ENCODE measurements at regions of chr3 and their contacts with region 1.

Region 1: DNA sequence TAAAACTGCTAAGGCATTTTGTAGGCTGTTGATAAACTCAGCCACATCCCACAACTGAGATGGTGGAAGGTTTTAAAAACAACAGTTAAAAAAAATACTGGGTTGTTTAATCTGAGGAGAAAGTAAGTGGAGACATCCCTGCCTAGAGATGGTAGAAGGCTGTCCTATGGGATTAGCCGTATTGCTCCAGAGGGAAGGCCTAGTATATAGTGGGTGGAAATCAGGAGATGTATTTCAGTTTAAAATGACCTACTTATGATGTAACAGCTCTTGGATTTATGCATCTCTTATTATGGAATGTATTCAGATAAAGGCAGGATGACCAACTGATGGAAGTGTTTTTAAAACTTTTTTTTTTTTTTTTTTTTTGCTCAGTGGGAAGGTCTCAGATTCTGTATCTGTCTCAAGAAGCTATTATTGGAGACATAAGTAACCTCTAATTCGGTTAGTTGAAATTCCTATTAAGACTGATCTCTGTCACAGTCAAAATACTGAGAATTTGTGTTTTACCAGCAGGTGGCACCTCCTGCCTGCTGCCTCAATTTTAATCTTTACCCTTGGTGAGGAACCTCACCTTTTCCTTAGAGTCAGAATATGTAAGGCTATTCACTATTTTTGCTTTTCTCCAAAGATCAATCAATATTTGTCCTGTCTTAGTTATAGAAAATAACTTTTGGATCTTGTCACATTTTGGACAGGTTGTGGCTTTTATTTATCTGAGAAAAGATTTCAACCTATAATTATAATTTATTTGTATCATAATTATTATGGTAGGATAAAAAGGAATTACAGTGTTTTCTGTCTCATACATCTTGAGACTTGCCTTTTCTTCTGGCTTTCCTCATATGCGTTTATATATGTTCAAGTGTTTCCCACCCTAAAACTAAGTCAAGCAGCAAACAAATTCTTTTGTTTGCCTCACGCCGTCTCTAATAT is 63.0 kb downstream of the VPS8 start:
- DNase-seq: peak; percentile 47
- H3K4me3 ChIP-seq: no peak overlapping the region; a peak in 1 of 4 replicates
- H3K27ac ChIP-seq: no peak overlapping the region
- H3K4me1 ChIP-seq: no peaks in the 10 kb centered on the region
- H3K27me3 ChIP-seq: no peaks in the 10 kb centered on the region
- CTCF ChIP-seq: peak; percentile 73
- EP300 ChIP-seq: no peak
- RAD21 ChIP-seq: peak; percentile 91

Region 2: DNA sequence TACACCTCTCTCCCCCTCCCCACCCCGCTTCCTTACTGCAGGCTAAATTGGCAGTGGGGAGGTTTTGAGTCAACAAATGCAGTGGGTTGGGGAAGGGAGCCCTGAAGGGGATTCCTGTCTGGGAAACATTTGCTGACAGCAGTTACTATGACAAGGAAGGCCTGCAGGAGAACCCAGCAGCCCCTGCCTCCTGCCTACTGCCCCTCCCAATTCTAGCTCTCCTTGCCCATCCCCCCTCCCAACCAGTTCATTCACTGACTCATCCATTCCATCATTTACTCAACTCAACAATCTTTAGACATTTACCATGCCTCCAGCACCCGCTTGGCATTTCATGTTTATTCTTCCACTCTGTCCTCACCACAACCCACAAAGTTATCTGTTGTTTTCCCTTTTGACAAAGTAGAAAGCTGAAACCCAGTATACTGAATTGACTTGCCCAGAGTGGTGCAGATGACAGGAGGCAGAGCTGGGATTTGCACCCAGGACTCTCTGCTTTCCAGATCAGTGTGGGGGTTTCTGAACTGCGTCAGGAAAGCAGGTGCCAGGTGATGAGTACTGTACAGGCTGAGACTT is 238.1 kb before region 1 on chr3:
- CTCF ChIA-PET with region 1: no interaction called
- POLR2A ChIA-PET with region 1: no interaction called
- DNase-seq: peak; percentile 38
- H3K4me3 ChIP-seq: no peak overlapping the region
- H3K27ac ChIP-seq: no peak overlapping the region
- H3K4me1 ChIP-seq: peaks cover 0 to 25% of the 10 kb centered on the region in 2 experiments; a peak in 2 of 4 replicates
- H3K27me3 ChIP-seq: no peaks in the 10 kb centered on the region
- CTCF ChIP-seq: no peak
- EP300 ChIP-seq: peak in 1 of 2 experiments; percentile 53; a peak in 2 of 4 replicates
- RAD21 ChIP-seq: no peak

Region 3: DNA sequence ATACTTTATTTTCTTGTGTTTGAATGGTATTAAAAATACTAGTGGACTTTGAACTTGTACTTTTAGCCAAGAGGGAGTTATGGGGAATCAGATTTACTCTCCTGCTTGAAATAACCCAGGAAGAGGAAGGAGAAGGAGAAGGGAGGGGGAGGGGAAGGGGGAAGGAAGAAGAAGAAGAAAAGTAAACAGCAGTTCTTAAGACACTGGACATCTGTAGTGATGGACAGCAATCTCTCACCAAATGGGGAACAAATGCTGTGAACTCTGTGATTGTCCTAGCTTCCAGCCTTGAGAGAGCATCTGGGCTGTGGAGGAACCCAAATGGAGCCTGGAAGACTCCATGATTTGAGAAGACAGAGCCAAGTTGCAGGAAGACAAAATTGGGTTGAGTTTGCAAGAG is 11.0 kb before region 1 on chr3:
- CTCF ChIA-PET with region 1: interaction called, 13 read pairs
- POLR2A ChIA-PET with region 1: no interaction called
- DNase-seq: no peak
- H3K4me3 ChIP-seq: no peak overlapping the region
- H3K27ac ChIP-seq: no peak overlapping the region
- H3K4me1 ChIP-seq: no peaks in the 10 kb centered on the region
- H3K27me3 ChIP-seq: no peaks in the 10 kb centered on the region
- CTCF ChIP-seq: no peak
- EP300 ChIP-seq: no peak
- RAD21 ChIP-seq: no peak

Region 4: DNA sequence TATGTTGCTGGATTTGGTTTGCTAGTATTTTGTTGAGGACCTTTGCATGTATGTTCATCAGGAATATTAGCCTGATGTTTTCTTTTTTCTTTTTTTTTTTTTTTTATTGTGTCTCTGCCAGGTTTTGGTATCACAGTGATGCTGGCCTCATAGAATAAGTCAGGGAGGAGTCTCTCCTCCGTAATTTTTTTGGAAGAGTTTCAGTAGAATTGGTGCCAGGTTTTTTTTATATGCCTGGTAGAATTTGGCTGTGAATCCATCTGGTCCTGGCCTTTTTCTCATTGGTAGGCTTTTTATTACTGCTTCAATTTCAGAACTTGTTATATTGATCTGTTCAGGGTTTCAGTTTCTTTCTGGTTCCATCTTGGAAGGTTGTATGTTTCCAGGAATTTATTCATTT is 102.8 kb after region 1 on chr3:
- CTCF ChIA-PET with region 1: no interaction called
- POLR2A ChIA-PET with region 1: no interaction called
- DNase-seq: no peak
- H3K4me3 ChIP-seq: no peak overlapping the region
- H3K27ac ChIP-seq: no peak overlapping the region
- H3K4me1 ChIP-seq: no peaks in the 10 kb centered on the region; a peak in 1 of 4 replicates
- H3K27me3 ChIP-seq: no peaks in the 10 kb centered on the region
- CTCF ChIP-seq: no peak
- EP300 ChIP-seq: no peak
- RAD21 ChIP-seq: no peak

Region 5: DNA sequence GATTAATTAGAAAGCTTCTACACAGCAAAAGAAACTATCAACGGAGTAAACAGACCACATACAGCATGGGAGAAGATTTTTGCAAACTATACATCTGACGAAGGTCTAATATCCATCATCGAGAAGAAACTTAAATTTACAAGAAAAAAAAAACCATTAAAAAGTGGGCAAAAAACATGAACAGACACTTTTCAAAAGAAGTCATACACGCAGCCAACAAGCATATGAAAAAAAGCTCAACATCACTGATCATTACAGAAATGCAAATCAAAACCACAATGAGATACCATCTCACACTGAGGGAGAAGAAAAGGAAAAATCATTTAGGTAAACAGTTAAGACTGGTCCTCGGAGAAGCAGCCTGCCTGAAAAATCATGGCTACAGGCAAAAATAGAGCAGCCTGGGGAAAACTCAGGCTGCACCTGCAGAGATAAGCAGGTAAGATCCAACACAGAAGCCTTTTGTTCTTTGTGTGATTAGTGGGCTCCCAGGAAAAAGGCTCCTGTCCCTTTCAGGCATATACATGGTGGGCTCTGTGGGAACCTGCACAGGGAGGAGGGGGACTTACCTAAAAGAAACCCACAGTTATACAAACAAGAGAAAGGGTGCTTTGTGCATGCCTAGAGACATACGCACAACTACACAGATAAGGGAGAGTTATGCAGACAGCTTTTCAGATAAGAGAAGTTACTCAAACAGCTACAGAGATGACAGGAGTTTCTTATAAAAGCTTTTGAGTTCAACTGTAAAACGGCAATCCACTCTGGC is 228.6 kb after region 1 on chr3:
- CTCF ChIA-PET with region 1: no interaction called
- POLR2A ChIA-PET with region 1: no interaction called
- DNase-seq: no peak
- H3K4me3 ChIP-seq: no peak overlapping the region
- H3K27ac ChIP-seq: no peak overlapping the region
- H3K4me1 ChIP-seq: no peaks in the 10 kb centered on the region
- H3K27me3 ChIP-seq: no peaks in the 10 kb centered on the region
- CTCF ChIP-seq: no peak
- EP300 ChIP-seq: no peak
- RAD21 ChIP-seq: no peak

Region 6: GRCh38 chr3:185210621-185211142 is 335.7 kb after region 1 on chr3:
- CTCF ChIA-PET with region 1: interaction called, 14 read pairs
- POLR2A ChIA-PET with region 1: no interaction called
- DNase-seq: peak; percentile 49
- H3K4me3 ChIP-seq: no peak overlapping the region
- H3K27ac ChIP-seq: peak overlapping the region in 1 of 2 experiments; percentile 60; a peak in 2 of 4 replicates
- H3K4me1 ChIP-seq: peaks cover 9 to 20% of the 10 kb centered on the region in 2 experiments; a peak in 3 of 4 replicates
- H3K27me3 ChIP-seq: no peaks in the 10 kb centered on the region
- CTCF ChIP-seq: no peak
- EP300 ChIP-seq: peak in 1 of 2 experiments; percentile 30; a peak in 1 of 4 replicates
- RAD21 ChIP-seq: no peak; the same call in 1 of the 2 replicates